ENCODE measurements at regions of chr4 and their contacts with region 1.

Region 1: GRCh38 chr4:143399113-143399949 is 62.7 kb downstream of the GAB1 start:
- DNase-seq: peak in 1 of 2 donors; percentile 44
- H3K4me3 ChIP-seq: no peak overlapping the region
- H3K27ac ChIP-seq: no peak overlapping the region
- H3K4me1 ChIP-seq: peaks cover 2 to 62% (median 36%) of the 10 kb centered on the region in 4 donors
- H3K27me3 ChIP-seq: no peaks in the 10 kb centered on the region
- CTCF ChIP-seq: peak in 5 of 7 experiments; percentile 33 to 67 (median 46)
- EP300 ChIP-seq: no peak
- POLR2A ChIP-seq: no peak

Region 2: GRCh38 chr4:143163618-143164017 is 235.7 kb before region 1 on chr4:
- intact Hi-C with region 1: no loop called
- DNase-seq: no peak
- H3K4me3 ChIP-seq: no peak overlapping the region
- H3K27ac ChIP-seq: no peak overlapping the region
- H3K4me1 ChIP-seq: no peaks in the 10 kb centered on the region
- H3K27me3 ChIP-seq: no peaks in the 10 kb centered on the region
- CTCF ChIP-seq: no peak
- EP300 ChIP-seq: no peak
- POLR2A ChIP-seq: no peak

Region 3: DNA sequence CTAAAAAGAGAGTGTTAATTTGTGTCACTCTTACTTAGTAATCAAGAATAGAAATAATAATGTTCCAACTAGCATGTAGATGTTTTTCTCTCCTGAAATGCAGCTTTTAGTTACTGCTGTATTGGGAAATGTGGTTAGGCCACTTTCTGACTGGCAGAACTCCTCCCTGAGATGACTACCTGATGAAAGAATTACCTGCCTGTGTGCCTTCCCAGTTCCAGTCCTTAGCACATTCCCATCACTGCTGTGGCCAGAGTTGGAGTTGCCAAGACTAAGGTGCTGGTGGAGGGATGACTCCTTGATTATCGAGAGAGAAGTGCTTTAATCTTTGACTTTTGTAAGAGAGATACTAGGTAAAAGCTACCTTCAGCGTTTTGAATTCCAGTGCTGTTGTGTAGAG is 53.1 kb before region 1 on chr4:
- intact Hi-C with region 1: loop called (anchors 10 kb)
- DNase-seq: peak in 1 of 2 donors; percentile 66
- H3K4me3 ChIP-seq: no peak overlapping the region
- H3K27ac ChIP-seq: peak overlapping the region in 4 of 5 donors; percentile 44 to 74 (median 60)
- H3K4me1 ChIP-seq: peaks cover 14 to 25% (median 19%) of the 10 kb centered on the region in 4 donors
- H3K27me3 ChIP-seq: no peaks in the 10 kb centered on the region
- CTCF ChIP-seq: no peak
- EP300 ChIP-seq: no peak
- POLR2A ChIP-seq: no peak

Region 4: DNA sequence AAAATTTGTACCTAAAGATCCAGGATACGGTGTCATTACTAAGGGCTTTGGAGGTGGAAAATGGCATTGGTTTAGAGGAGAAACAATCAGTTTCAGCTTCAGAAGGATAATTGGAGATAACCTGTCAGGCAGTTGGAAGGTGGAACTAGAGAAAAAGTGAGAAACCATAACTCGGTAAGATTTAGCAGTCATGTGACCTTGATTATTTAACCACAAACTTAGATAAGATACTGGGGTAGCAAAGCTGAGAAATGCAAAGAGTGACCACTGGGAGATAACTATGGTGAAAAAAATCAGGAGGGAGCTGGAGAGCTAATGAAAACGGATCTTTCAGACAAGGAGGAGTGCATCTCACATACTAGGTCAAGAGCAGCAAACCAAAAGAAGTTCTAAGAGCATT is 55.9 kb after region 1 on chr4:
- intact Hi-C with region 1: no loop called
- DNase-seq: peak in 1 of 2 donors; percentile 8
- H3K4me3 ChIP-seq: no peak overlapping the region
- H3K27ac ChIP-seq: no peak overlapping the region
- H3K4me1 ChIP-seq: peaks cover 0 to 15% (median 5%) of the 10 kb centered on the region in 4 donors
- H3K27me3 ChIP-seq: no peaks in the 10 kb centered on the region
- CTCF ChIP-seq: no peak
- EP300 ChIP-seq: no peak
- POLR2A ChIP-seq: no peak